ENCODE measurements at regions of chrX and their contacts with region 1.

Region 1: DNA sequence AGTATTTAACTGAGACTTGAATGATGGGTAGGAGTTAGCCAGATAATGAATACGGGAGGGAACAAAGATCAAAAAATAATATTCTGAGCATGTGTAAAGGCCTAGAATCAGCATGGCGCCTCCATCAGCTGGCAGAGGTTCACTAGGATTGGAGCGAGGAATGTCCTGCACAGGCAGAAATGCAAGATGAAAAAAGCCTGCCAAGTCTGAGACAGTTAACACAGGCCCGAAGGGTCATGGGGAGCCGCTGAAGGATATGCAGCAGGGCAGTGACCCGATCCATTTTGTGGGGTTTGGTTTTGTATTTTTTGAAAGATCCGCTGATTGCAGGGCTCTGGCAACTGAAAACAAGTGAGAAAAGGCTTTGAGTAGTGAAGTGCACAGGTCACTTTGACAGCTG is 40.1 kb downstream of the SMPX start:
- DNase-seq: no peak
- ATAC-seq: no peak

Region 2: GRCh38 chrX:19954335-19955096 is 1763.3 kb before region 1 on chrX:
- intact Hi-C with region 1: loop called (anchors 5 kb)
- DNase-seq: no peak
- ATAC-seq: peak; percentile 55

Region 3: DNA sequence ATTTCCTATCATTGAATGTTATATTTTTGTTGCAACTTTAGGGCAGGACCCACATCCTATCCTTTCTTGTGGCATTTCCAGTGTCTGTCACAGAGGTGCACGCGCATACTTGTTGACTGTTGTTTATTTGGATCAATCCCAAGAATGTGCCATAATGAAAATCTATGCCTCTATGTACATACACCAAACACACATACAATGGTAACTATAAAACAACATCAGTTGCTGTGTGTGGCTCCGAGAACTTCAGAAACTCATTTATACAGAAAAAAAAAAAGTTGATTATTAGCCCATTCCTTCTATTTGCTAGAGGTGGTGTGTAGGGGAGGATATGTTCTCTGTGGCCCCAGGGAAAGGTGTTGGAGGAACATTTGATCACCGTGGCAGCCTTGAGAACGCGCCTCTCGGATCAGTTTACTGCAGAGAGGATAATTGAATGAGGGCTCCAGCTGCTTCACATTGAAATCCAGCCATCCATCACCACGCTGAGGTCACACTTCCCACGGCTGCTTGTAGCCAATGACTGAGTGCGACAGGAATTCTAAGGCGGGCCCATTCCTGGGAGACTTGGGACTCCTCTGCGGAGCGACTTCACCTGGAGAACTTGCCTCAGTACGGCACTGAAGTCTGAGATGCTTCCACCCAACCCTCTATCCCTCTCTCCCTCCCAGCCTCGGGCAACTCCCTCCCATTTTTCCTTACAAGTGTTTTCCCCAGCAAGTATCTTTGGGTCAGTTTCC is 20.6 kb after region 1 on chrX:
- intact Hi-C with region 1: no loop called
- DNase-seq: no peak
- ATAC-seq: no peak

Region 4: DNA sequence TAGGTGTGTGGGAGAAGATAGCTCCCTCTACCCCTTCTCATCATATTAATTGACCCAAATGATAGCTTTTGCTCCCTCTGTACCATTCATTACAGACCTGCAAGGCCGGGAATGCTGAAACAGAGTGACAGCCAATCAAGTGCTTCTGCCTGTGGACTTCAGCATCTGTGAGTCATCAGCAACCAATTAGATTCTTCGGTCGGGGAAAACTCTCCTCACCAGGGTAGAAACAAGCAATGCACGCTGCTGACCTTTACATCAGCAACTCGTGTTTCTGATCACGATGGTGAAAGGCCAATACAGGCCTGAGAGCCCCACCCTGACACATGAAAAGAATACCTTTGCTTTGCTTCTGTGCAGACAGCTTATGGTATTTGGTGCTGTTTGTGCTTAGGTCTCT is 934.8 kb after region 1 on chrX:
- intact Hi-C with region 1: no loop called
- DNase-seq: no peak
- ATAC-seq: peak; percentile 54

Measured in sciatic nerve (tissue), 2 donors.